ENCODE measurements at regions of chr20 and their contacts with region 1.

Region 1: DNA sequence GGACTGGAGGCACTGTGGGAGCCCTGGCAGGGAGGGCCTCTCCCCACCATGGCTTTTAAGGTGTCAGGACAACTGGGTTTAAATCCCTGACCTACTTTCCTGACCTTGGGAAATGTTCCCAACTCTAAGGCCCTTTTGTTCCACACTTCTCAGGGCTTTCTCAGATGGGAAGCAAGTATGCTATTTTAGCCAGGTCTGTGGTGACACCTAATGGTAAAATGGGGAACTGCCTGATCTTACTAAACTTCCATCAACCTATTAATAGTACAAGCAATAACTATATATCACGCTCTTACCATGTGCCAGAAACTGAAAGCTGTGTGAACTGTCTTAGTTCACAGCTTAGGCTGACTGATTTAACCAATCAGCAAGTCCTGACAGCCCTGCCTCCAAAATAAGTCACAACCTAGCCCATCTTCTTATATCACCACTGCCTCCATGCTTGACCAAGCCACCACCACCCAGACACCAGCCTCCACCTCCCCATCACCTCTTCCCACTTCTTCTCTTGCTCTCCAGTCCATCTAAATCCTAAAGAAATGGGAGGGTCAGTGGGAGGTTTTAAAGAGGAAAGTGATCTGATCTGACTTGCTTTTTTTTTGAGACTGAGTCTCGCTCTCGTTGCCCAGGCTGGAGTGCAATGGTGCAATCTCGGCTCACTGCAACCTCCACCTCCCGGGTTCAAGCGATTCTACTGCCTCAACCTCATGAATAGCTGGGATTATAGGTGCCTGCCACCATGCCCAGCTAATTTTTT is 6.9 kb upstream of the BLCAP start:
- DNase-seq: peak; percentile 83
- ATAC-seq: peak; percentile 81
- H3K4me3 ChIP-seq: 0 out of 6 replicates have a peak overlapping the region, but pooled peaks of 1 of the 3 experiments have one; percentile 8
- H3K27ac ChIP-seq: no peak overlapping the region
- H3K4me1 ChIP-seq: peaks cover 54% of the 10 kb centered on the region
- H3K27me3 ChIP-seq: no peaks in the 10 kb centered on the region
- CTCF ChIP-seq: peak; percentile 97
- EP300 ChIP-seq: no peak
- POLR2A ChIP-seq: no peak
- RAD21 ChIP-seq: peak; percentile 93

Region 2: GRCh38 chr20:37192137-37192854 is 342.3 kb before region 1 on chr20:
- CTCF ChIA-PET with region 1: interaction called, 8 read pairs
- POLR2A ChIA-PET with region 1: no interaction called
- in situ Hi-C with region 1: loop called (anchors 5 kb)
- intact Hi-C with region 1: loop called (anchors 1 kb)
- DNase-seq: peak; percentile 80
- ATAC-seq: peak; percentile 89
- H3K4me3 ChIP-seq: no peak overlapping the region
- H3K27ac ChIP-seq: no peak overlapping the region
- H3K4me1 ChIP-seq: peaks cover 30% of the 10 kb centered on the region
- H3K27me3 ChIP-seq: no peaks in the 10 kb centered on the region
- CTCF ChIP-seq: peak; percentile 96
- EP300 ChIP-seq: no peak
- POLR2A ChIP-seq: peak in 1 of 2 experiments; percentile 30; a peak in 1 of 4 replicates
- RAD21 ChIP-seq: no peak; the same call in 1 of the 2 replicates

Region 3: GRCh38 chr20:37202267-37202943 is 332.2 kb before region 1 on chr20:
- CTCF ChIA-PET with region 1: interaction called, 40 read pairs
- POLR2A ChIA-PET with region 1: no interaction called
- in situ Hi-C with region 1: loop called (anchors 5 kb)
- intact Hi-C with region 1: loop called (anchors 1 kb)
- DNase-seq: peak; percentile 81
- ATAC-seq: peak; percentile 71
- H3K4me3 ChIP-seq: no peak overlapping the region
- H3K27ac ChIP-seq: peak overlapping the region; percentile 28
- H3K4me1 ChIP-seq: peaks cover 15% of the 10 kb centered on the region
- H3K27me3 ChIP-seq: no peaks in the 10 kb centered on the region
- CTCF ChIP-seq: peak; percentile 71
- EP300 ChIP-seq: no peak
- POLR2A ChIP-seq: no peak
- RAD21 ChIP-seq: 0 out of 2 replicates have a peak, but pooled peaks have one; percentile 19

Region 4: DNA sequence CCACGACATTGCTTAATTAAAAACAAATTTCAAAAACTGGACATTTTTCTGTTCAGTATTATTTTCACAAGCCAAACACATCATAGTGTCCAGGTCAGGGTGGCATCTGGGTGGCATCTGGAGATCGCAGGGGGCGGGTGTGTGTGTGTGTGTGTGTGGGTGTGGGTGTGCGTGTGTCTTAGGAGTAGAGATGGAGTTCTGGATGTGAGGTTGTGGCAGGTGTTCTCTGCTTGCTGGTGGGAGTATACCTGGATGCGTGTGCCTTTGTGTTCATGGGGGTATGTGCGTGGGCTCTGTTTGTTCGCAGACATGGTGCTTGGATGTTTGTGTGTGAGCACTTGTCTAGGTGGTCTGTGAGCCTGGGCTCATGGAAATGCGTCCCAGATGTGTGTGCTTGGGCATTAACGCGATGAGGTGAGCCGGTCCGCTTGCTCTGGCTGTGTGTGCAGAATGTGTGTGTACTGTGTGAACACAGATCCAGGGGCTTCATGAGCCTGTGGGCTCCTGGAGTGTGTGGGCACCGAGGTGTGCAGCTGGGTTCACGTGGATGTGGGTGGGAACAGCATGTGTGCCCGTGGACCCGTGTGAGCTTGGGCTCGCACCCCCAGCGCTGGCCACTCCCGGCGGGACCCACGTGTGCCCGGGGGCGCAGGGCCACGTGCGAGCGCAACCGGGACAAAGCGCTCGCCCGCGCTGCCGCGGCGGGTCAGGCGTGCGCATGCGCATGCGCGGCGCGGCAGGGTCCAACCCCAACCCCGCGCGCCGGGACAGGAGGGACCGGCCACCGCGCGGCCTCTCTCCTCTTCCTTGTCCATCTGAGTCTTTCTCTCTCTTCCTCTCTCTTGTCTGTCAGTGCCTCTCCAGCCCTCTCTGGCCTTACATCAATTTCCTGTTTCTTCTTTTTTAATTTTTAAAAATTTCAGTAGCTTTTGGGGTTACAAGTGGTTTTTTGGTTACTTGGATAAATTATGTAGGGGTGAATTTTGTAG is 128.3 kb before region 1 on chr20:
- CTCF ChIA-PET with region 1: interaction called, 4 read pairs
- POLR2A ChIA-PET with region 1: no interaction called
- in situ Hi-C with region 1: loop called (anchors 5 kb)
- intact Hi-C with region 1: loop called (anchors 1 kb)
- DNase-seq: no peak
- ATAC-seq: peak; percentile 40
- H3K4me3 ChIP-seq: peak overlapping the region in 2 of 3 experiments; percentile 23 to 55; a peak in 3 of 6 replicates
- H3K27ac ChIP-seq: no peak overlapping the region
- H3K4me1 ChIP-seq: peaks cover 41% of the 10 kb centered on the region
- H3K27me3 ChIP-seq: peaks cover 7 to 43% of the 10 kb centered on the region in 2 experiments
- CTCF ChIP-seq: 0 out of 2 replicates have a peak, but pooled peaks have one; percentile 13
- EP300 ChIP-seq: no peak
- POLR2A ChIP-seq: peak; percentile 41 to 47; a peak in 3 of 4 replicates
- RAD21 ChIP-seq: peak; percentile 80

Region 5: GRCh38 chr20:37490663-37491350 is 43.8 kb before region 1 on chr20:
- CTCF ChIA-PET with region 1: no interaction called
- POLR2A ChIA-PET with region 1: no interaction called
- in situ Hi-C with region 1: no loop called
- intact Hi-C with region 1: no loop called
- DNase-seq: no peak
- ATAC-seq: no peak
- H3K4me3 ChIP-seq: no peak overlapping the region
- H3K27ac ChIP-seq: no peak overlapping the region
- H3K4me1 ChIP-seq: no peaks in the 10 kb centered on the region
- H3K27me3 ChIP-seq: no peaks in the 10 kb centered on the region
- CTCF ChIP-seq: no peak
- EP300 ChIP-seq: no peak
- POLR2A ChIP-seq: no peak
- RAD21 ChIP-seq: no peak

Region 6: DNA sequence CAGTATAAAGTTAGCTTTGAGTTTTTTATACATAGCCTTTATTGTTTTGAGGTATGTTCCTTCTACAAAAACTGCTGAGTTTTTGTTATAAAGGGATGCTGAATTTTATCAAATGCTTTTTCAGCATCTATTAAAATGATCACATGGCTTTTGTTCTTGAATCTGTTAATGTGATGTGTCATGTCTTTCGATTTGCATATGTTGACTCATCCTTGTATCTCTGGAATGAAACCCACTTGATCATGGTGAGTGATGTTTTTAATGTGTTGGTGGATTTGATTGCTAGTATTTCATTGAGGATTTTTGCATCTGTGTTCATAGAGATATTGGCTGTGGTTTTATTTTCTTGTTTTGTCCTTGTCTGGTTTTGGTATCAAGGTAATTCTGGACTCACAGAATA is 17.8 kb after region 1 on chr20:
- CTCF ChIA-PET with region 1: no interaction called
- POLR2A ChIA-PET with region 1: no interaction called
- in situ Hi-C with region 1: no loop called
- intact Hi-C with region 1: no loop called
- DNase-seq: no peak
- ATAC-seq: no peak
- H3K4me3 ChIP-seq: no peak overlapping the region
- H3K27ac ChIP-seq: no peak overlapping the region
- H3K4me1 ChIP-seq: peaks cover 14% of the 10 kb centered on the region
- H3K27me3 ChIP-seq: peaks cover 0 to 3% of the 10 kb centered on the region in 2 experiments; a peak in 1 of 5 replicates
- CTCF ChIP-seq: no peak
- EP300 ChIP-seq: no peak
- POLR2A ChIP-seq: no peak
- RAD21 ChIP-seq: no peak

Region 7: DNA sequence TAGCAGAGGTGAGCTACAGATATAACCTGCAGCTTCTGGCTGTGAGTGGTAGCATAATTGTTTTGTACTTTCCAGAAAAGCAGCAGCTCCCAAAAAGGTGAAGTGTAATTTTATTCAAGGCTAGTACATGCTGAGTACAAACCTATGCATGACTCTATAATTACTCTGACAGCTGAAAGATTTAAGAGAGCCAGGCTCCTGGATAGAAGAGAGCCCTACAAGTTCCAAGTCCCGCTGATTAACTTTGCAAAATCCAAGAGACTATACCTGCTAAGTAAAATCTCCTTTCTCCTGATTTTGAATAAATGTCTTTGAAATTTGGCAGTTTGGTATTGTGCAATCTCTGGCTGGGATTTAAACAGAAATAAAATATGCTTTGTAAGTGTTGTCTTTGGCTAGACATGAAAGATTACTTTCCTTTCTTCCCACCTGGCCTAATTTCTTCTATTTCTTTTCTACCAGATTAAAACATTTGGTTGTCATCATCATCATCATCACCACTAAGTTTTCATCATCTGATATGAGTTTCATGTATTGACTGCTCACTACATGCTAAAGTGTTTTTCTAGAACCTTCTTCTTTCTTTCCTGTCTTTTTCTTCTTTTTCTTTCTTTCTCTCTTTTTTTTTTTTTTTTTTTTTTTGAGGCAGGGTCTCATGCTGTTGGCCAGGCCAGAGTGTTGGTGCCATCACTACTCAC is 238.9 kb after region 1 on chr20:
- CTCF ChIA-PET with region 1: no interaction called
- POLR2A ChIA-PET with region 1: no interaction called
- in situ Hi-C with region 1: no loop called
- intact Hi-C with region 1: no loop called
- DNase-seq: no peak
- ATAC-seq: no peak
- H3K4me3 ChIP-seq: no peak overlapping the region
- H3K27ac ChIP-seq: no peak overlapping the region
- H3K4me1 ChIP-seq: no peaks in the 10 kb centered on the region
- H3K27me3 ChIP-seq: no peaks in the 10 kb centered on the region
- CTCF ChIP-seq: no peak
- EP300 ChIP-seq: no peak
- POLR2A ChIP-seq: no peak
- RAD21 ChIP-seq: no peak